ENCODE measurements at regions of chr10 and their contacts with region 1.

Region 1: GRCh38 chr10:75235375-75236177 is at the start of gene COMTD1:
- DNase-seq: peak; percentile 91 to 98
- H3K4me3 ChIP-seq: peak within 1 kb of the TSS; percentile 26 to 70 (median 64)
- H3K27ac ChIP-seq: no peak within 1 kb of the TSS
- H3K4me1 ChIP-seq: peaks cover 0 to 15% (median 10%) of the 10 kb centered on the region in 4 experiments; a peak in 6 of 7 replicates
- H3K27me3 ChIP-seq: no peaks in the 10 kb centered on the region
- CTCF ChIP-seq: peak; percentile 99 to 100 (median 99)
- EP300 ChIP-seq: no peak
- POLR2A ChIP-seq: 0 out of 3 replicates have a peak, but pooled peaks of 1 of the 2 experiments have one; percentile 12
- RAD21 ChIP-seq: peak; percentile 98 to 99
- total RNA-seq, gene COMTD1: 31.9 and 32.5 TPM in 2 replicates

Region 2: DNA sequence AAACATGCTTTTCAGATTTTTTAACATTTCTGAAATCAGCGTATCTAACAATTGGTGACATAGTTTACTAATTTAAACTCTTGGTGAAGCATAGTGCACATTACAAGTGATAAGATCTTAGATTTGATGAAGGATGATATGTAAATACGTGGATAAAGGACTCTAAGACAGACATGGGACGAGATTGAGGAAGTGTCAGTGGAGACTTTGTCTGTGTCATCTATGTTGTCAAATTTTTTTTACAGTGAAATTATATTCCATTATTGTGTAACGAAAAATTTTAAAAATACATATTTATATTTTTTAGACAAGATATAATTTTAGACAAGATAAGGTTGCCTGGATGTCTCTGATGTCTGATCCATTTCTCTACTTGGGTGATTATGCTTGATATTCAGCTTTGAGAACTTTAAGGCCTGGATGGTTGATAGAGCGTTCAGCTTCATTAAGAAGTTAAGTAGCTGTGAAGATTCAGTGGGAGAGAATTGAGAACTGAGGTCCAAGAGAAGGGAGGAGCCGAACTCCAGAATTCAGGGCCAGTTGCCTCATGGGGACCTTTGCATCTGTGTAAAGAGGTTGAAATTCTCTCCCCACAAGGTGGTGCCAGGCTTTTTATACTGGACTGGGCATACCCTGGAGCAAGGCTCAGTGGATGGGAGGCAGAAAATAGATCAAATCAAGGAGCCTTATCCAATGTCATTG is 346.5 kb before region 1 on chr10:
- CTCF ChIA-PET with region 1: no interaction called
- POLR2A ChIA-PET with region 1: no interaction called
- DNase-seq: no peak
- H3K4me3 ChIP-seq: no peak overlapping the region
- H3K27ac ChIP-seq: no peak overlapping the region
- H3K4me1 ChIP-seq: no peaks in the 10 kb centered on the region
- H3K27me3 ChIP-seq: no peaks in the 10 kb centered on the region
- CTCF ChIP-seq: peak in 2 of 3 experiments; percentile 15 to 22; a peak in 2 of 4 replicates
- EP300 ChIP-seq: no peak
- POLR2A ChIP-seq: no peak
- RAD21 ChIP-seq: peak; percentile 30 to 37; a peak in 3 of 4 replicates

Region 3: GRCh38 chr10:74947781-74948401 is 287.7 kb before region 1 on chr10:
- CTCF ChIA-PET with region 1: no interaction called
- POLR2A ChIA-PET with region 1: no interaction called
- DNase-seq: no peak
- H3K4me3 ChIP-seq: no peak overlapping the region
- H3K27ac ChIP-seq: no peak overlapping the region
- H3K4me1 ChIP-seq: peaks cover 0 to 3% (median 1%) of the 10 kb centered on the region in 4 experiments; a peak in 2 of 7 replicates
- H3K27me3 ChIP-seq: no peaks in the 10 kb centered on the region
- CTCF ChIP-seq: no peak
- EP300 ChIP-seq: no peak
- POLR2A ChIP-seq: no peak
- RAD21 ChIP-seq: no peak

Region 4: DNA sequence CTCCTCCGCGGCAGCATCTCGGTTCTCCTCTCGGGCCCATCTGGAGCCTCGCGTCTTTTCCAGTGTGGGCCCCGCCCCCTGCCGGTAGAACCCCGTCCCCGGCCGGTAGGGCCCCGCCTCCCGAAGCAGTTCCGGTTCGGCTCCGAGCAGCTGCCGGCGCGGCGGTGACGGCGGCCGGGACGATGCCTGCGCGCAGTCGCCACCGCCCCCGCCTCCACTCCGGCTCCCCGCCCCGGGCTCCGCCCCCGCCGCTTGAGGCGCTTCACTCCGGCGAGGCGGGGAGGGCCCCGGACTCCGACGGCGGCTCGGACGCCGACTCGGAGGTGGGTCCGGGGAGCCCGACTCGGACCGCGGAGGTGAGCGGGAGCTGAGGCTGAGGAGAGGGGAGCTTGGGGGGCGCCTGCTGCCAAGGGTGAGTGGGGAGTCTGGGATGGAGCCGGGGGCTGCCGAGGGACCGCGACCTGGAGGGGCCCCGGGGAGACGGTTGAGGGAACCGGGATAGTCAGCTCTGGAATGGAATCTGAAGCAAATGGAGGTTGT is 124.1 kb before region 1 on chr10 and contains the start of gene SAMD8:
- CTCF ChIA-PET with region 1: interaction called, 9 read pairs
- POLR2A ChIA-PET with region 1: interaction called, 13 read pairs
- DNase-seq: peak; percentile 91 to 97
- H3K4me3 ChIP-seq: peak within 1 kb of the TSS; percentile 85 to 95 (median 89)
- H3K27ac ChIP-seq: peak within 1 kb of the TSS; percentile 69; the same call in 1 of the 2 replicates
- H3K4me1 ChIP-seq: peaks cover 0 to 9% (median 2%) of the 10 kb centered on the region in 4 experiments; a peak in 4 of 7 replicates
- H3K27me3 ChIP-seq: no peaks in the 10 kb centered on the region
- CTCF ChIP-seq: peak in 2 of 3 experiments; percentile 2 to 5; a peak in 2 of 4 replicates
- EP300 ChIP-seq: no peak
- POLR2A ChIP-seq: peak in 1 of 2 experiments; percentile 43; a peak in 1 of 3 replicates
- RAD21 ChIP-seq: no peak
- total RNA-seq, gene SAMD8: 16.6 and 20.9 TPM in 2 replicates

Region 5: GRCh38 chr10:75187961-75188426 is 47.6 kb before region 1 on chr10:
- CTCF ChIA-PET with region 1: interaction called, 209 read pairs
- POLR2A ChIA-PET with region 1: interaction called, 801 read pairs
- DNase-seq: peak; percentile 56 to 61
- H3K4me3 ChIP-seq: no peak overlapping the region
- H3K27ac ChIP-seq: peak overlapping the region; percentile 2; the same call in 1 of the 2 replicates
- H3K4me1 ChIP-seq: peaks cover 0 to 12% (median 7%) of the 10 kb centered on the region in 4 experiments; a peak in 5 of 7 replicates
- H3K27me3 ChIP-seq: no peaks in the 10 kb centered on the region
- CTCF ChIP-seq: peak; percentile 46 to 73 (median 64)
- EP300 ChIP-seq: 0 out of 3 replicates have a peak, but pooled peaks of 1 of the 2 experiments have one; percentile 33
- POLR2A ChIP-seq: peak in 1 of 2 experiments; percentile 44; a peak in 1 of 3 replicates
- RAD21 ChIP-seq: peak; percentile 73 to 77

Region 6: DNA sequence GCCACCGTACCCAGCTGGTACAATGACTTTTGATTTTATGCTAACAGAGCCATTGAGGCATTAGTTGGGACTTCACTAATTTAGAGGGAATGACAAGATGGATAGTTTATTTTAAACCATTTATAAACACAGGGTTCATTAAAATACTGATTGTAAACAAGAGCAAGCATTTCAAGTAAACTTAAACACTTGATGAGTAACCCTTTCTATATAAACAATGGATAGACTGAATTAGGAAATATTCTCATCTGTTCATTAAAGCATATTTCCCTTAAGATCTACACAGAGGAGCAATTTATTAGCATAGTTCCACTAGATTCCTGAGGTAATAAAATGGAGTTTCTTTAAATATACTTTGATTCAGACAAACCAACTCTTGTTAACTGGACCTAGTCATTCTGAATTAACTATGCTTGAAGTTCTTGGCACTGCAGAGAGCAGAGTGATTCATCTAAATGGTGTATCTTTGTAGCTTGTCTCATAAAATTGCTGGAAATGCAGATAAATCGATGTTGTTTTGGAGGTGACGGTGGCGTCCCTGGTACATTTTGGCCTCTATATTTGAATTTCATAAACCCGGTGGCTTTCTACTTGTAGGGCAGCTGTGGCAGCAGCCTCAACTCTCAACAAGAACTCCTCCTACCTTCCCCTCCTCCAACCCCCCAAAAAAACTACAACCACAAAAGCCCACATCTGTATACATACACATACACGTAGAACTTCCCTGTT is 40.4 kb before region 1 on chr10:
- CTCF ChIA-PET with region 1: interaction called, 209 read pairs
- POLR2A ChIA-PET with region 1: interaction called, 801 read pairs
- DNase-seq: no peak
- H3K4me3 ChIP-seq: no peak overlapping the region
- H3K27ac ChIP-seq: no peak overlapping the region
- H3K4me1 ChIP-seq: no peaks in the 10 kb centered on the region
- H3K27me3 ChIP-seq: no peaks in the 10 kb centered on the region
- CTCF ChIP-seq: no peak
- EP300 ChIP-seq: no peak
- POLR2A ChIP-seq: no peak
- RAD21 ChIP-seq: no peak

Region 7: DNA sequence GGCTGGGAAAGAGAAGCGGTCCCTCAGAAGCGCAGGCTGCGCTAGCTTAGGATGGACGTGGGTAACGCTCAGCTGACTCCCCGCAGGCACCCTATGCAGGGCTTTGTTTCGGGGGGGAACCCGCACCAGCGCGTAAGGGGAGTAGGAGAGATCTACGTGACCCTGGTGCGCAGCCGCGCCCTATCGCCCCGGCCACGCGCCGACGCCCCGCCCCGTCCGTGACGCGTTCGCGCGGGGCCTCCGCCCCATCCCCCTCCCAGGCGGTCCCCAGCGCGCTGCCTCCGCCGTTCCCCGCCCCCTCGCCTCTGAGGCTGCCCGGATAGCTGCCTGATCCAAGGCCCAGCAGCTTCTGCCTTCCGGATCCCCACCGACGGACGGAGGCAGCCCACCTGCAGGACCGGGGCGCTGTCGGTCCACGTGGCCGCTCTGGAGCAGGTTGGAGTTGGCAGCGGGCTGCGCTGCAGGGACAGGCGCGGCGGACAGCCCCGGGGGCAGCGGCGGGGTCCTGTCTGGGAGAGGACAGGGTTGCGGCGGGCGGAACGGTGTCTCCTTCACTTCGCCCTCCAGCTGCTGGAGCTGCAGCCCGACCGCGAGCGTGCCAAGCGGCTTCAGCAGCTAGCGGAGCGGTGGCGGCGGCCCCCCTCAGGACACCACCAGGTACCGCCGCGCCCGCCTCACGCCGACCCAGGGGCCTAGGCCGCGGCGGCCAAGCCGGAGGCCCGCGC is 25.1 kb before region 1 on chr10 and contains the start of gene VDAC2:
- CTCF ChIA-PET with region 1: interaction called, 128 read pairs
- POLR2A ChIA-PET with region 1: interaction called, 801 read pairs
- DNase-seq: peak in 1 of 2 experiments; percentile 95
- H3K4me3 ChIP-seq: peak within 1 kb of the TSS; percentile 94 to 100 (median 96)
- H3K27ac ChIP-seq: peak within 1 kb of the TSS; percentile 100
- H3K4me1 ChIP-seq: peaks cover 5 to 20% (median 9%) of the 10 kb centered on the region in 4 experiments
- H3K27me3 ChIP-seq: no peaks in the 10 kb centered on the region
- CTCF ChIP-seq: no peak
- EP300 ChIP-seq: no peak
- POLR2A ChIP-seq: peak; percentile 50 to 89
- RAD21 ChIP-seq: no peak
- total RNA-seq, gene VDAC2: 284 and 287 TPM in 2 replicates

Region 8: DNA sequence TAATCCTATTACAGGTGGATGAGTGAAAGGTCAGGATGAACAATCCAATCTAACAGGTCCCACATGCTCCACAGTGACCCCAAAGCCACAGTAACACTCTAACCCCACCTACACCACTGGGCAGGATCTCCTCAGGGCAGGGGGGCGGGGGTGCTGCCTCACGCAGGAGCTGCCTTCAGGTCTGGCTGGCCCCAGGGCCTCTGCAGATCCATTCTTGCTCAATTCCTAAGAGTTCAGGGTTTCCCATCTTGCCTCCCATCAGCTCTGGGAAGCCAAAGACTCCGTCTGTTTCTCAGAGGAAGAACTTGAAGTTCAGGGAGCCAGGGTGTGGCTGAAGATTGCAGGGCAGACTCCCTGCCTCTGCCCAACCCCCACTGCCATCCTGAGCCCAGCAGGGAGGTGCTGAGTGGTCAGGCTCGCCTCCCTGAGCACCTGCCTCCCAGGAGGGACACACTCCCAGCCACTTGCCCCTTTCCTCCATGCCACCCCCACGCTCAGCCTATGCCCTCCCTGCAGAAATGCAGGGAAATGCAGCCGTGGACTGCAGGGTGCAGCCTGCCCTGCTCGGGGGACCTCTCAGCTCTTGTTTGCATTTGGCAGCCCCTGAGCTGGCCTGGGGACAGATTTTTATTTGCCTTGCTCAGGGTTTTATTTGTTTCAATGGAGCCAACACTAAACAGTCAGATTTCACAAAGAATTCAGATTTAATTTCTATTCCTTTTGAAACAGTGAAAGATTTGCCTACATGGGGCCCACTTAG is 10.1 kb after region 1 on chr10:
- CTCF ChIA-PET with region 1: interaction called, 29 read pairs
- POLR2A ChIA-PET with region 1: interaction called, 4 read pairs
- DNase-seq: no peak
- H3K4me3 ChIP-seq: no peak overlapping the region
- H3K27ac ChIP-seq: no peak overlapping the region
- H3K4me1 ChIP-seq: peaks cover 0 to 6% (median 4%) of the 10 kb centered on the region in 4 experiments; a peak in 4 of 7 replicates
- H3K27me3 ChIP-seq: 0 out of 7 replicates have a peak, but pooled peaks cover 0 to 2% (median 0%) of the 10 kb centered on the region in 4 experiments
- CTCF ChIP-seq: no peak
- EP300 ChIP-seq: no peak
- POLR2A ChIP-seq: no peak
- RAD21 ChIP-seq: no peak